ENCODE measurements at regions of chr19 and their contacts with region 1.

Region 1: GRCh38 chr19:35044317-35045117 is 3.0 kb downstream of the HPN start:
- DNase-seq: peak in 1 of 2 experiments; percentile 95
- H3K4me3 ChIP-seq: no peak overlapping the region
- H3K27ac ChIP-seq: no peak overlapping the region
- H3K4me1 ChIP-seq: peaks cover 5 to 37% (median 23%) of the 10 kb centered on the region in 4 experiments
- H3K27me3 ChIP-seq: no peaks in the 10 kb centered on the region
- CTCF ChIP-seq: peak; percentile 78 to 99 (median 84)
- EP300 ChIP-seq: no peak
- POLR2A ChIP-seq: no peak
- RAD21 ChIP-seq: peak; percentile 66 to 72

Region 2: DNA sequence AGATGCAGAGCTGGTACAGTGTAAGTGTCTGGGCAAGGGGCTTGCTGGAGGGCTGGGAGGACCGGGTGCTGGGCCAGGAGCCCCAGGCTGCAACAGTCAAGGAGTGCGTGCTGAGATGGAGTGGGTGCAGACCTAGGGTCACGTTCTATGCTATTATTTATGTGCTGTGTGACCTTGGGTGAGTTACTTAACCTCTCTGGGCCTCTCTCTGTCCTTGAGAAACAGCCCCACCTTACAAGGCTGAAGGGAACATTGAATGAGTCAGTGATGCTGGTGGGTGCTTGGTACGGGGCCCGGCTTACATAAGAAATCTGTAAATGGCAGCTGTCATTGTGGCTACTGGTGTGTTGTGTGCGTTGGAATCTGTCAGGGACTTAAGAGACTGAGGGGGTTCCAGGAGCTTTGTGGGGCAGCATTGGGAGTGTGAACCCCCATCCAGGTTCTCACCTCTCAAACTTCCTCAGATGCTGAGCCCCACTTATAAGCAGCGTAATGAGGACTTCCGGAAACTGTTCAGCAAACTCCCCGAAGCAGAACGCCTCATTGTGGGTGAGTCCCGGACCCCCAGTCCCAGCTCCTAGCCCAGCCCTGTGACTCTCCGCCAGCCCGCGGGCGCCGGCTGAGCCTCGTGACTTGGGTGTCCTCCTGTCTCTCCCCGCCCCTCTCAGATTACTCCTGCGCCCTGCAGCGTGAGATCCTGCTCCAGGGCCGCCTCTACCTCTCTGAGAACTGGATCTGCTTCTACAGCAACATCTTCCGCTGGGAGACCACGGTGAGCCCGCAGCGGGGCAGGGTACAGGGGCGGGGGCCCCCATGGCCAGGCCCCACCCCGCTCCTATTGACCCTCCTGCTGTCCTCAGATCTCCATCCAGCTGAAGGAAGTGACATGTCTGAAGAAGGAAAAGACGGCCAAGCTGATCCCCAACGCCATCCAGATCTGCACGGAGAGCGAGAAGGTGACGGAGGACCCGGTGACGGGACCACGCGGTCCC is 34.8 kb before region 1 on chr19:
- CTCF ChIA-PET with region 1: no interaction called
- POLR2A ChIA-PET with region 1: no interaction called
- DNase-seq: no peak
- H3K4me3 ChIP-seq: no peak overlapping the region
- H3K27ac ChIP-seq: no peak overlapping the region
- H3K4me1 ChIP-seq: 0 out of 7 replicates have a peak, but pooled peaks cover 0 to under 1% (median 0%) of the 10 kb centered on the region in 4 experiments
- H3K27me3 ChIP-seq: no peaks in the 10 kb centered on the region
- CTCF ChIP-seq: no peak
- EP300 ChIP-seq: no peak
- POLR2A ChIP-seq: no peak
- RAD21 ChIP-seq: no peak

Region 3: GRCh38 chr19:35030257-35031071 is 14.1 kb before region 1 on chr19 and contains the start of gene SCN1B:
- CTCF ChIA-PET with region 1: interaction called, 14 read pairs
- POLR2A ChIA-PET with region 1: interaction called, 14 read pairs
- DNase-seq: peak in 1 of 2 experiments; percentile 78
- H3K4me3 ChIP-seq: peak within 1 kb of the TSS; percentile 38 to 69 (median 40)
- H3K27ac ChIP-seq: no peak within 1 kb of the TSS
- H3K4me1 ChIP-seq: peaks cover 0 to 8% (median 4%) of the 10 kb centered on the region in 4 experiments; a peak in 6 of 7 replicates
- H3K27me3 ChIP-seq: peaks cover 4 to 32% (median 28%) of the 10 kb centered on the region in 4 experiments
- CTCF ChIP-seq: no peak
- EP300 ChIP-seq: no peak
- POLR2A ChIP-seq: no peak
- RAD21 ChIP-seq: no peak
- total RNA-seq, gene SCN1B: 3.3 and 3.5 TPM in 2 replicates

Region 4: DNA sequence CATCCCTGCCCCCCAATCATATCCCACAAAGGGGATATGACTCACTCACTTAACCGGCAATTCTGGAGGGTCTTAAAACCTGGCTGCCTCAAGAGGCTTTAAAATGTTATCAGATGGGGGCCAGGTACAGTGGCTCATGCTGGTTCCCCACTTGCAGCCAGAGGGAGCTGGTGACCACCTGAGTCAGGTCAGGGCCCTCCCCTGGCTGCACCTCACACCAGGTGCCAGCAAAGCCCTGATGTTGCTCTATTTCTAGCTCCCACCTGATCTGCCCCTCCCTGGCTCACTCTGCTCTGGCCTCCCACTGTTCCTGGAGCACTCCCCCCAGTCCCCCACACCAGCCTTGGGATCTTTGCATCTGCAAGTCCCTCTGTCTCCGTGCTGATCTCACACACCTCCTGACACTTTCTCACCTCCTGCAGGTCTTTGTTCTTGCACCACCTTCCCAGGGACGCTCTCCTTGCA is 11.2 kb after region 1 on chr19:
- CTCF ChIA-PET with region 1: interaction called, 105 read pairs
- POLR2A ChIA-PET with region 1: interaction called, 18 read pairs
- DNase-seq: peak; percentile 75
- H3K4me3 ChIP-seq: 0 out of 8 replicates have a peak overlapping the region, but pooled peaks of 1 of the 4 experiments have one; percentile 26
- H3K27ac ChIP-seq: no peak overlapping the region
- H3K4me1 ChIP-seq: peaks cover 0 to 11% (median 2%) of the 10 kb centered on the region in 4 experiments; a peak in 5 of 7 replicates
- H3K27me3 ChIP-seq: no peaks in the 10 kb centered on the region
- CTCF ChIP-seq: peak; percentile 83 to 91 (median 89)
- EP300 ChIP-seq: no peak
- POLR2A ChIP-seq: no peak
- RAD21 ChIP-seq: peak; percentile 67 to 72

Region 5: GRCh38 chr19:35090506-35091237 is 46.2 kb after region 1 on chr19:
- CTCF ChIA-PET with region 1: interaction called, 56 read pairs
- POLR2A ChIA-PET with region 1: no interaction called
- DNase-seq: peak in 1 of 2 experiments; percentile 80
- H3K4me3 ChIP-seq: peak overlapping the region; percentile 13 to 45 (median 36); a peak in 7 of 8 replicates
- H3K27ac ChIP-seq: no peak overlapping the region
- H3K4me1 ChIP-seq: peaks cover 3 to 14% (median 6%) of the 10 kb centered on the region in 4 experiments; a peak in 6 of 7 replicates
- H3K27me3 ChIP-seq: no peaks in the 10 kb centered on the region
- CTCF ChIP-seq: peak; percentile 38 to 49 (median 40)
- EP300 ChIP-seq: no peak
- POLR2A ChIP-seq: 0 out of 3 replicates have a peak, but pooled peaks of 1 of the 2 experiments have one; percentile 19
- RAD21 ChIP-seq: peak; percentile 52 to 59

Region 6: DNA sequence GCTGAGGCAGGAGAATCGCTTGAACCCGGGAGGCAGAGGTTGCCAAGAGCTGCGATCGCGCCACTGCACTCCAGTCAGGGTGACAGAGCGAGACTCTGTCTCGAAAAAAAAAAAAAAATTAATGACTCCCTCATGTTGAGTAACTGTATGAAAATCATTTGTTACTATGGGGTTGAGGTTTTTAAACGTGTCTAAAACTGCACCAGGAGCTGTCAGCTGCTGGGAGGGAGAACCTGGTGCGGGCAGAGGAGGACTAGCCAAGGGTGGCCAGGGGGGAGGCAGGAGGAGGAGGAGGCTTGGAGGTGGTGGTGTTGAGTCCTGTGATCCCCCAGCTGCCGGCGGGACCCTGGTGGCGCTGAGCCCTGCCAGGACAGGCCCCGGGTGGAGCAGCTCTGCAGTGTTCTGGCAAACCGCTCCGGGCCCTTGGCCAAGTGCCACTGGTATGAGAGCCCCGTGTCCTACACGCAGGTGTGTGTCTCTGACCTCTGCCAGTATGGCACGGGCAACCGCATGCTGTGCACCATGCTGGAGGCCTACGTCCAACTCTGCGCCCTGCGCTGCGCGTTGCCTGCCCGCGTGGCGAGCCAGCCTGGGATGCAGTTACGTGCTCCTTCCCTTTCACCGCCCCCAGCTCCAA is 54.0 kb after region 1 on chr19:
- CTCF ChIA-PET with region 1: interaction called, 56 read pairs
- POLR2A ChIA-PET with region 1: no interaction called
- DNase-seq: no peak
- H3K4me3 ChIP-seq: no peak overlapping the region
- H3K27ac ChIP-seq: no peak overlapping the region
- H3K4me1 ChIP-seq: peaks cover 0 to 3% (median 1%) of the 10 kb centered on the region in 4 experiments; a peak in 3 of 7 replicates
- H3K27me3 ChIP-seq: no peaks in the 10 kb centered on the region
- CTCF ChIP-seq: no peak
- EP300 ChIP-seq: no peak
- POLR2A ChIP-seq: no peak
- RAD21 ChIP-seq: no peak

Region 7: GRCh38 chr19:35114353-35115176 is 70.0 kb after region 1 on chr19:
- CTCF ChIA-PET with region 1: interaction called, 25 read pairs
- POLR2A ChIA-PET with region 1: interaction called, 3 read pairs
- DNase-seq: peak; percentile 73 to 99
- H3K4me3 ChIP-seq: peak overlapping the region in 3 of 4 experiments; percentile 23 to 56 (median 31); a peak in 5 of 8 replicates
- H3K27ac ChIP-seq: no peak overlapping the region
- H3K4me1 ChIP-seq: peaks cover 0 to 23% (median 14%) of the 10 kb centered on the region in 4 experiments; a peak in 6 of 7 replicates
- H3K27me3 ChIP-seq: peaks cover 0 to 2% (median 0%) of the 10 kb centered on the region in 4 experiments; a peak in 1 of 7 replicates
- CTCF ChIP-seq: peak; percentile 92 to 99 (median 94)
- EP300 ChIP-seq: no peak
- POLR2A ChIP-seq: no peak
- RAD21 ChIP-seq: peak; percentile 86 to 91

Region 8: GRCh38 chr19:35140962-35141637 is 96.6 kb after region 1 on chr19:
- CTCF ChIA-PET with region 1: interaction called, 36 read pairs
- POLR2A ChIA-PET with region 1: interaction called, 6 read pairs
- DNase-seq: peak; percentile 86 to 98
- H3K4me3 ChIP-seq: peak overlapping the region; percentile 12 to 68 (median 50)
- H3K27ac ChIP-seq: no peak overlapping the region
- H3K4me1 ChIP-seq: peaks cover 5 to 32% (median 25%) of the 10 kb centered on the region in 4 experiments
- H3K27me3 ChIP-seq: peaks cover 0 to 18% (median 8%) of the 10 kb centered on the region in 4 experiments; a peak in 5 of 7 replicates
- CTCF ChIP-seq: peak; percentile 44 to 65 (median 61)
- EP300 ChIP-seq: no peak
- POLR2A ChIP-seq: no peak
- RAD21 ChIP-seq: peak; percentile 55 to 64

Measured in H1 (cell line).